GM12878 (cell line): ENCODE measurements at regions of chr5 and their contacts with region 1.

Region 1: GRCh38 chr5:134125039-134126015 is 10.8 kb downstream of the TCF7 start:
- DNase-seq: no peak
- ATAC-seq: peak; percentile 41
- H3K4me3 ChIP-seq: no peak overlapping the region
- H3K27ac ChIP-seq: peak overlapping the region; percentile 47
- H3K4me1 ChIP-seq: peaks cover 64% of the 10 kb centered on the region
- H3K27me3 ChIP-seq: no peaks in the 10 kb centered on the region
- CTCF ChIP-seq: no peak
- EP300 ChIP-seq: 0 out of 4 replicates have a peak, but pooled peaks of 1 of the 2 experiments have one; percentile 11
- POLR2A ChIP-seq: no peak
- RAD21 ChIP-seq: no peak

Region 2: DNA sequence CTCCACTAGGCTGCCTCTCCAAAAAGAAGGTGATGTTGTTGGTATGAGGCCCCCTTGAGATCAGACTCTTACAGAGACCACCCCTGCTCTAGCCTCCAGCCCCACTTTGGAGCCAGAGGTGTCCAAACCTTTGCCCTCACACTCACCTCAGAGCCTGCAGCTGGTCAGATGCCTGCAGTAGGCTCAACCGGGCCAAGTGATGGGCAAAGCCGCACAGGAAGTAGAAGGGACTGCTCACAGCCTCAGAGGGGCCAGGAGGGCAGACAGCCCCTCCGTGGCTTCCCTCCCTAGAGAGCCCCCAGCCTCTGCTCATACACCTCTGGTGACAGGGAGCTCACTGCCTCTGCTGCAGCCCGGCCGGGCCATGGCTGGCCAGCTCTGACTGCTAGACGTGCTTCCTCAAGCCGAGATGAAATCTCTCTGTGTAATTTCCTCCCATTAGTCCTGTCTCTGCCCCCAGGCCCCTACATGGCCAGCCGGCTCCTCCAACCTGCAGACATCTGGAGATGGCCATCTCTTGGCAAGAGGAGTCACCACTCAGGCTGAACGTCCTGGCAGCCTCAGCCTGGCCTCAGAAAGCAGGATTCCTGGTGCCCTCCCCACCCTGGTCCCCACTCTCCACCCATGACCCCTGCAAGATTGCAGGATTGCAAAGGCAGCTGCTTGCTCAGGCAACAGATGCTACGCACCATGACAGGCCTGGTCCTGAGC is 18.2 kb before region 1 on chr5:
- CTCF ChIA-PET with region 1: interaction called, 104 read pairs
- POLR2A ChIA-PET with region 1: interaction called, 291 read pairs
- RAD21 ChIA-PET with region 1: interaction called, 90 read pairs
- SMC1A ChIA-PET with region 1: no interaction called
- in situ Hi-C with region 1: no loop called
- intact Hi-C with region 1: loop called (anchors 2 kb)
- DNase-seq: no peak
- ATAC-seq: no peak
- H3K4me3 ChIP-seq: no peak overlapping the region
- H3K27ac ChIP-seq: no peak overlapping the region
- H3K4me1 ChIP-seq: peaks cover 58% of the 10 kb centered on the region
- H3K27me3 ChIP-seq: no peaks in the 10 kb centered on the region
- CTCF ChIP-seq: no peak
- EP300 ChIP-seq: no peak
- POLR2A ChIP-seq: no peak
- RAD21 ChIP-seq: no peak